ENCODE measurements at regions of chr14 and their contacts with region 1.

Region 1: GRCh38 chr14:103104654-103105452 is 10.3 kb downstream of the EXOC3L4 start:
- DNase-seq: peak; percentile 75
- H3K27ac ChIP-seq: peak overlapping the region; percentile 26; the same call in 1 of the 2 replicates
- CTCF ChIP-seq: peak; percentile 96

Region 2: DNA sequence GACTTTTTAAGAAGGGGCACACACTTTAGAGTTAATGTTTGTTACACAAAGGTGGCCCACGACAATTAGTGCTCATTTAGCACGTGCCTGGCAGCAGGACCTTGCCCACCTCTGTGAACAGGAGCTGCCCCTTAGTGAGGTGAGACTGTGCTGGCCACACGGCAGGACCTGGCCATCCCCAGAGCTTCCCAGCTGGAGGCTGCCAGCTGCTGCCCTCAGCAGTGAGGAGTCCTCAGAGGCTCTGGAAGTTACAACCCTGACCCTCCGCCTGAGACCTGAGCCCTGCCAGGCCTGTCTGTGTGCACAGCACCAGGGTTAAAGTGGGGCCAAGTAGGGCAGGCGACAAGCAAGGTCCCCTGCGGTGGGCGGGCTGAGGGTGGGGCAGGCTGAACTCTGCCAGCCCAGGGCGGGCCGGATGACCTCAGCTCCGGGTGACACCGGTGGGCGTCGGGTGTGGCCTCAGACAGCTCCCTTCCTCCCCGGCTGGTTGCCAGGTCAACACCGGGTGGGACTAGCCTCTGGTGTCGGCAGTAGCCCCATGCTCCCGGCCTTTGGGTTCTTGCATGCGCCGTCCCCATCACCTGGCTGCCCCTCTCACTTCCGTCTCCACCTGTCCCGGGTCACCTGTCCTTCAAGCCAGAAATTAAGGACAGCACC is 30.0 kb before region 1 on chr14:
- CTCF ChIA-PET with region 1: interaction called, 13 read pairs
- POLR2A ChIA-PET with region 1: no interaction called
- DNase-seq: no peak
- H3K27ac ChIP-seq: peak overlapping the region; percentile 99
- CTCF ChIP-seq: no peak

Region 3: GRCh38 chr14:103123634-103124500 is 19.0 kb after region 1 on chr14:
- CTCF ChIA-PET with region 1: interaction called, 57 read pairs
- POLR2A ChIA-PET with region 1: no interaction called
- DNase-seq: no peak
- H3K27ac ChIP-seq: peak overlapping the region; percentile 89
- CTCF ChIP-seq: peak; percentile 32; the same call in 1 of the 2 replicates

Region 4: DNA sequence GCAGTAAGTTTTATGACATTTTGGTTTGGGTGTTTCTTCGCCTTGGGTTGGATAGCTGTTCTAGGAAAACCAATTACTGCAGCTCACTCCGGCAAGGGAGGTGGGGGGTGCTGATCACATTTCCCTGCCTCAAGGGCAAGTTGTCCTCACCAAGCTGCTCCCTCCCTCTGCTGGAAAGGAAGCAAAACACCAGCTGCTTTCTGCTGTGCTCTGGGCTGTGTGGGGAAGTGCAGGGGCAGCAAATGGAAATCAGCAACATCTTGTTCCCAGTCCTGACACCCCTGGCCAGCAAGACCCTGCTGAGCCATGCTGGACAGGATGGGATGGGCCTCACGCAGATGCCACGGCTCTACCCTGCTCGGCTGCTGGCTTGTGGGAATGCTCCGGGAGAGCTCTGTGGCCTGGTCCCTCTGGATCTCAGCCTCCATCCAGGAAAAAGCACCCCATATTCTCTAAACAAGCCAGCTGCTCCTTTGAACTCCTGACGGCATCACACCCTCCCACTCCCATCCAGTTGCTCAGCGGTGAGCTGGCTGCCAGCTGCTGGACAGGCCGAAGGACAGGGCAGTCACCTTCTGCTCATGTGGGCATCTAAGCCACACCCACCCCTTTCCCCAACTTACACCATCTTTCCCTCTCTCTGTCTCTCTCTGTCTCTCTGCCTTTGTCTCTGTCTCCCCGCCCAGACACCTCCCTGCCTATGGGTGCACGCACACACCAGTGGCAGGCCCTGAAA is 176.8 kb after region 1 on chr14:
- CTCF ChIA-PET with region 1: interaction called, 10 read pairs
- POLR2A ChIA-PET with region 1: no interaction called
- DNase-seq: peak; percentile 50
- H3K27ac ChIP-seq: no peak overlapping the region
- CTCF ChIP-seq: no peak

Region 5: DNA sequence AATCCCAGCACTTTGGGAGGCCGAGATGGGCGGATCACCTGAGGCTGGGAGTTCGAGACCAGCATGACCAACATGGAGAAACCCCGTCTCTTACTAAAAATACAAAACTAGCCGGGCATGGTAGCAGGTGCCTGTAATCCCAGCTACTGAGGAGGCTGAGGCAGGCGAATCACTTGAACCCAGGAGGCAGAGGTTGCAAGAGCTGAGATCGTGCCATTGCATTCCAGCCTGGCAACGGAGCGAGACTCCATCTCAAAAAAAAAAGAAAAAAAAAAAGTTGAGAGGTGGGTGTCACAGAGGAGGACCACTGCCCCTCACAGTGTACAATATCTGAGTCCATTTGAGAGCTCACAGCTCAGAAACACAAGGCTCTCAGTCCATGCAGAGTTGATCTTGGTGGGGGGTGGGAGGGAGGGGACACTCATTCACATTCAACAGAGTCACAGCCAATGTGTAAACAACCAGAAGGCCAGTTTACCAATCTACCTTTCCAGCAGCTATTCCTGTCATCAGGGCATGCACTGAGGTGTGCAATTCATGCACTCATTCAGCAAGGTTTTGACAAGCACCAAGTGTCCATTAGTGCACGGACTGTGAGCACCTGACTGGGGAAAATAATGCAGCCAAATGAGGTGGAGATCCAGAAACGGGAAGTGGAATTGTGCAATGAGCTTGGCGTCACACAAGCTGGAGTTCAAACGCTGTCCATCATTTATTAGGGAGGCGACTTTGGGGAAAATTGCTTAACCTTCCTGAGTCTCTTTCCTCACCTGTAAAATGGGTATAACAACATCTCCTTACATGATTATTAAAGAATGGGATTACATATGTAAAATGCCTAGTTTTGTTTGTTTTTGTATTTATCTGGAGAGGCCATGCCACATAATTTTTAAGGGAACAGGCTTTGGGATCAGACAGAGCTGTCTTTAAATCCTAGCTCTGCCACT is 224.8 kb after region 1 on chr14:
- CTCF ChIA-PET with region 1: interaction called, 15 read pairs
- POLR2A ChIA-PET with region 1: interaction called, 3 read pairs
- DNase-seq: peak; percentile 44
- H3K27ac ChIP-seq: no peak overlapping the region
- CTCF ChIP-seq: no peak